CD8-positive, alpha-beta T cell (primary cell): ENCODE measurements at regions of chr17 and their contacts with region 1.

Region 1: DNA sequence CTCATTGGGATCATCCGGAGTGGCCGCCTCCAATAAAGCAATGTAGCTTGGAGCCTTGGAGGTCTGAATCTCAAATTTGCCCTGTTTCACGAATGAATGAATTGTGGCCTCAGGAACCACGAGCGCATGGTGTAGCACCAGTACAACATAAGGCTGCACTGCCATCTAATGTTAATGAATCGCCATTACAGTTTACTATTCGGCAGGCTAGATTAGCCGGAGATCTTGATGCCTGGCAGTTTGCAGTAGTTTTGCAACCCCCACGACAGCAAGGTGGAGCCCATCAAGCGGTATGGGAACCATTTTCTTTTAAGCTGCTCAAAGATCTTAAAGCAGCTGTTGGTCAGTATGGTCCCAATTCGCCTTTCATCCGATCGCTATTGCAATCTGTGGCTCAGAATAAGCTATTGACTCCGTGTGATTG is 18.8 kb downstream of the ALOX15B start:
- DNase-seq: peak in 7 of 9 experiments; percentile 15 to 83 (median 51)
- ATAC-seq: peak; percentile 93
- H3K4me3 ChIP-seq: no peak overlapping the region
- H3K4me3 Mint-ChIP-seq: no peak overlapping the region
- H3K27ac ChIP-seq: no peak overlapping the region
- H3K27ac Mint-ChIP-seq: no peak overlapping the region
- H3K4me1 ChIP-seq: no peaks in the 10 kb centered on the region
- H3K4me1 Mint-ChIP-seq: peaks cover 12% of the 10 kb centered on the region
- H3K27me3 ChIP-seq: peaks cover 0 to 8% of the 10 kb centered on the region in 2 experiments
- H3K27me3 Mint-ChIP-seq: peaks cover 57% of the 10 kb centered on the region
- CTCF ChIP-seq: peak; percentile 69

Region 2: GRCh38 chr17:7823581-7824397 is 233.9 kb before region 1 on chr17:
- CTCF ChIA-PET with region 1: interaction called, 3 read pairs
- POLR2A ChIA-PET with region 1: no interaction called
- intact Hi-C with region 1: loop called (anchors 1 to 2 kb)
- DNase-seq: no peak
- ATAC-seq: no peak
- H3K4me3 ChIP-seq: no peak overlapping the region
- H3K4me3 Mint-ChIP-seq: no peak overlapping the region
- H3K27ac ChIP-seq: no peak overlapping the region
- H3K27ac Mint-ChIP-seq: no peak overlapping the region
- H3K4me1 ChIP-seq: no peaks in the 10 kb centered on the region
- H3K4me1 Mint-ChIP-seq: no peaks in the 10 kb centered on the region
- H3K27me3 ChIP-seq: no peaks in the 10 kb centered on the region
- H3K27me3 Mint-ChIP-seq: no peaks in the 10 kb centered on the region
- CTCF ChIP-seq: no peak

Region 3: DNA sequence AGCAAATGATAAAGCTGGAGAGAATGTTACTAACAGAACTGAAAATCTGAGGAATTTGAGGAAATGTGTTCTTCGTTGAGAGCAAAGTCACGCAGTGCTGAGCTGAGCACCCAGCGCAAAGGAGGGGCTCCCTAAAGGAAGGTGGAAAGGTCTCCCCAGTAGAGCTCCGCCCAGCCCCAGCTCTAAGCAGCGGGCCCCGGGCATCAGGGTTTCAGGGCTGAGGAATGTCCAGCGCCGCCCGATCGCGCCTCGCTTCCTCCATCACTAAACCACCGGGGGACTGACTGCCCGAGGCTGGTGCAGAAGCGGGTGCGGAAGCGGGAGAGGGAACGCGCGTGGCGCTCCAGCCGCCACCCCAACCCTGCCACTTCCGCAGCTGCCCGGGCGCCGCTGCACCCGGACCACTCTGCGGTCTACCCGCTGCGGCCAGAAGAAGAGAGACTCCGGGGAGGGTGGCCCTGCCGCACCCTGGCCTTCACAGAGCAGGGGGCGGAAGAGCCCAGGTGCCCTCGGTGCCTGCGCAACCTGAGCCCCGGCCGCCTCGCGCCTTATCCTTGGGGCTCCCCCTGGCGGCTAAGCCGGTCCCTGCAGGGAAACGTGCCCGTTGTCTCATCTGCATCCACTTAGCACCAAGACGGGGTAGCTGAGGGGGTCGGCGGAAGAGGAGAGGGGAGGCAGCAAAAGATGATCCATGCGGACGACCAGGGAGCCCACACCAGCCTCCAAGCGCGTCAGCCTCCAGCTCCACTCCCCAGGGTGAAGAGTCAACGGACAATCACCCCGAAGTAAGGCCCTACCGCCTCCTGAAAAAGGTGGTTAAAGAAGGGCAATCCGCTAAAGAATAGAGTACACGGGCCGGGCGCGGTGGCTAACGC is 67.7 kb before region 1 on chr17:
- CTCF ChIA-PET with region 1: interaction called, 13 read pairs
- POLR2A ChIA-PET with region 1: no interaction called
- intact Hi-C with region 1: loop called in 1 of 2 experiments (anchors 2 kb)
- DNase-seq: peak; percentile 85 to 99 (median 92)
- ATAC-seq: peak; percentile 96
- H3K4me3 ChIP-seq: peak overlapping the region; percentile 47 to 61
- H3K4me3 Mint-ChIP-seq: peak overlapping the region; percentile 77
- H3K27ac ChIP-seq: peak overlapping the region; percentile 51 to 61
- H3K27ac Mint-ChIP-seq: peak overlapping the region; percentile 86
- H3K4me1 ChIP-seq: peaks cover 13% of the 10 kb centered on the region
- H3K4me1 Mint-ChIP-seq: peaks cover 21% of the 10 kb centered on the region
- H3K27me3 ChIP-seq: no peaks in the 10 kb centered on the region
- H3K27me3 Mint-ChIP-seq: peaks cover under 1% of the 10 kb centered on the region
- CTCF ChIP-seq: peak; percentile 85

Region 4: DNA sequence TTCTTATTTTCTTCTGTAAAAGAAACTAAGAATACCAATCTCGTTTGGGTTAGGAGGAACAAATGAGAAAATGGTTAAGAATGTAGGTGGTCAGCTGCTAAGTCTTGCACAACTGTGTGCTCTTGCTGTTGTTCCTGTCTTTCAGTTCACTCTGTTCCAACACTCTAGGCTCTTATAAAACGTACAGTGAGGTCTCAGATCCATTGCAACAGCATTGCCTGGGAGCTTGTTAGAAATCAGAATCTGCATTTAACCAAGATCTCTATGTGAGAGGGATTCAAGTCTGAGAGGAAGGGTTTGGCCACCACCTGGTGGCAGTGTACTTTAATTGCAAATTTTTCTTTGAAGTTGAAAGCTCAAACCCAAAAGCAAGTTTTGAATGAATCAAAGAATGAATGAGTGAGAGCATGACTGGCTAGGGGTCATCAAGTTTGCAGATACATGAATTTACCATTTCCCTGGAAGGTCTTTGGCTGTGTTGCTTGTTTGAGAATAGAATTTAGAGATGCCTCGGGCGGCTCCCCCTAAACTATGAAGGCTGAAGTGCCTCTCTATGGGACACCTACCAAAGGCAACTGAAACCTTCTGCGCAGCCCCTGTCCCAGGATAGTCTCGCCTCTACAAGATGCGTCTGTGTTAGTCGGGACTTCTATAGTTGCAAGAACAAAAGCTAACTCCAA is 16.3 kb before region 1 on chr17:
- CTCF ChIA-PET with region 1: interaction called, 13 read pairs
- POLR2A ChIA-PET with region 1: no interaction called
- intact Hi-C with region 1: no loop called
- DNase-seq: peak in 6 of 9 experiments; percentile 24 to 67 (median 36)
- ATAC-seq: peak; percentile 59
- H3K4me3 ChIP-seq: no peak overlapping the region
- H3K4me3 Mint-ChIP-seq: no peak overlapping the region
- H3K27ac ChIP-seq: no peak overlapping the region
- H3K27ac Mint-ChIP-seq: no peak overlapping the region
- H3K4me1 ChIP-seq: peaks cover 4% of the 10 kb centered on the region
- H3K4me1 Mint-ChIP-seq: peaks cover 2% of the 10 kb centered on the region
- H3K27me3 ChIP-seq: peaks cover 0 to 8% of the 10 kb centered on the region in 2 experiments
- H3K27me3 Mint-ChIP-seq: peaks cover 22% of the 10 kb centered on the region
- CTCF ChIP-seq: peak; percentile 59

Region 5: GRCh38 chr17:8109661-8110464 is 52.2 kb after region 1 on chr17:
- CTCF ChIA-PET with region 1: interaction called, 110 read pairs
- POLR2A ChIA-PET with region 1: interaction called, 4 read pairs
- intact Hi-C with region 1: loop called (anchors 1 kb)
- DNase-seq: peak; percentile 68 to 91 (median 83)
- ATAC-seq: peak; percentile 99
- H3K4me3 ChIP-seq: peak overlapping the region; percentile 40 to 77
- H3K4me3 Mint-ChIP-seq: peak overlapping the region; percentile 71
- H3K27ac ChIP-seq: peak overlapping the region in 1 of 2 experiments; percentile 31
- H3K27ac Mint-ChIP-seq: no peak overlapping the region
- H3K4me1 ChIP-seq: peaks cover 9% of the 10 kb centered on the region
- H3K4me1 Mint-ChIP-seq: peaks cover 4% of the 10 kb centered on the region
- H3K27me3 ChIP-seq: peaks cover 0 to 24% of the 10 kb centered on the region in 2 experiments
- H3K27me3 Mint-ChIP-seq: peaks cover 28% of the 10 kb centered on the region
- CTCF ChIP-seq: peak; percentile 94

Region 6: GRCh38 chr17:8785547-8786413 is 728.1 kb after region 1 on chr17:
- CTCF ChIA-PET with region 1: interaction called, 17 read pairs
- POLR2A ChIA-PET with region 1: no interaction called
- intact Hi-C with region 1: loop called (anchors 2 kb)
- DNase-seq: peak; percentile 27 to 73 (median 60)
- ATAC-seq: peak; percentile 56
- H3K4me3 ChIP-seq: no peak overlapping the region
- H3K4me3 Mint-ChIP-seq: no peak overlapping the region
- H3K27ac ChIP-seq: no peak overlapping the region
- H3K27ac Mint-ChIP-seq: no peak overlapping the region
- H3K4me1 ChIP-seq: no peaks in the 10 kb centered on the region
- H3K4me1 Mint-ChIP-seq: no peaks in the 10 kb centered on the region
- H3K27me3 ChIP-seq: peaks cover 0 to 2% of the 10 kb centered on the region in 2 experiments
- H3K27me3 Mint-ChIP-seq: no peaks in the 10 kb centered on the region
- CTCF ChIP-seq: peak; percentile 83